Spleen (tissue), 13 donors: ENCODE measurements at regions of chr11 and their contacts with region 1.

Region 1: GRCh38 chr11:102390667-102391465 is 43.9 kb downstream of the BIRC2 start:
- DNase-seq: peak; percentile 86
- H3K4me3 ChIP-seq: no peak overlapping the region
- H3K27ac ChIP-seq: peak overlapping the region in 1 of 8 donors; percentile 42
- H3K4me1 ChIP-seq: peaks cover 0 to 12% (median 4%) of the 10 kb centered on the region in 6 donors
- H3K27me3 ChIP-seq: no peaks in the 10 kb centered on the region
- CTCF ChIP-seq: peak; percentile 79 to 93 (median 87)
- POLR2A ChIP-seq: no peak

Region 2: DNA sequence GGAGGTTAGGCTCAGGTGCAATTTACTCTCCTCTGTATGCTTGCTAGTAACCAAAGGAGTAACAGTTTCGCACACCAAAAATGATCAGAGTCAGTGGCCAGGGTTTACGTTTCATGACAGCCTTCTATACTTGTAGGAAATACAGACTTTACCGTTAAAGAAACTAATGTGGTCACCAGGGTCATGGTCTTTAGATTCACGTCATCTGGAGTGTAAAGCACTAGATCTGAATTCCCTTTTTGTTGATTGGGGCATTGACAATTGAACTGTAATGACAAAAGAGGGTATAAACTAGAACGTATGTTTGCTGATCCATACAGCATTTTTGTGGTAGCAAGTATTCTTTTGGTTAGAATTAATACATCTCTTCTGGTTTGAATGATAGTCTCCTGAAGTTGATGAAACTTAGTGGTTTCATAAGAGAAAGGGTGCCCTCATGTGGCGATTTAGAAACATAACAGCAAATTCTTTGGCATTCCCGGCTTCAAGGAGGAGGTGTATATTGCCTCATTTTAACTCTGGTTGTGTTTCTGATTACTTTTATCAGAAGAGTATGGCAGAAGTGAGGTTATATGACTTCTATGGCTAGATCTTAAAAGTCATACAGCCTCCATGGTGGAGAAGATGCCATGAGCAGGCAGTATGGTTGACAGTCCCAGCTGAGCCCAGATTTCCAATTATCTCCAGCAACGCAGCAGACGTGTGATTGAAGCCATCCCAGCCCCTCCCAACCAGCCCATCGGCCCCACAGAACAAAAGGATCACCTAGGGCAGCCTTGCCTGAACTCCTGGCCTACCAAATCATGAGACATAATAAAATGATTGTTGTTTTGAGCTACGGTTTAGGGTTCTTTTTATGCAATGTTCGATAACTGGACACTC is 104.5 kb after region 1 on chr11:
- intact Hi-C with region 1: loop called (anchors 10 kb)
- DNase-seq: no peak
- H3K4me3 ChIP-seq: no peak overlapping the region
- H3K27ac ChIP-seq: no peak overlapping the region
- H3K4me1 ChIP-seq: peaks cover 0 to 10% (median 1%) of the 10 kb centered on the region in 6 donors
- H3K27me3 ChIP-seq: no peaks in the 10 kb centered on the region
- CTCF ChIP-seq: peak; percentile 59 to 86 (median 79)
- POLR2A ChIP-seq: no peak